ENCODE measurements at regions of chr1 and their contacts with region 1.

Region 1: GRCh38 chr1:27383039-27383605 is at the start of gene CD164L2:
- DNase-seq: no peak
- H3K4me3 ChIP-seq: no peak within 1 kb of the TSS
- H3K27ac ChIP-seq: no peak within 1 kb of the TSS
- H3K4me1 ChIP-seq: no peaks in the 10 kb centered on the region
- H3K27me3 ChIP-seq: no peaks in the 10 kb centered on the region
- CTCF ChIP-seq: no peak
- total RNA-seq, gene CD164L2: not detected

Region 2: GRCh38 chr1:27330786-27331451 is 52.2 kb before region 1 on chr1:
- intact Hi-C with region 1: no loop called
- DNase-seq: no peak
- H3K4me3 ChIP-seq: no peak overlapping the region
- H3K27ac ChIP-seq: no peak overlapping the region
- H3K4me1 ChIP-seq: no peaks in the 10 kb centered on the region
- H3K27me3 ChIP-seq: no peaks in the 10 kb centered on the region
- CTCF ChIP-seq: no peak

Region 3: DNA sequence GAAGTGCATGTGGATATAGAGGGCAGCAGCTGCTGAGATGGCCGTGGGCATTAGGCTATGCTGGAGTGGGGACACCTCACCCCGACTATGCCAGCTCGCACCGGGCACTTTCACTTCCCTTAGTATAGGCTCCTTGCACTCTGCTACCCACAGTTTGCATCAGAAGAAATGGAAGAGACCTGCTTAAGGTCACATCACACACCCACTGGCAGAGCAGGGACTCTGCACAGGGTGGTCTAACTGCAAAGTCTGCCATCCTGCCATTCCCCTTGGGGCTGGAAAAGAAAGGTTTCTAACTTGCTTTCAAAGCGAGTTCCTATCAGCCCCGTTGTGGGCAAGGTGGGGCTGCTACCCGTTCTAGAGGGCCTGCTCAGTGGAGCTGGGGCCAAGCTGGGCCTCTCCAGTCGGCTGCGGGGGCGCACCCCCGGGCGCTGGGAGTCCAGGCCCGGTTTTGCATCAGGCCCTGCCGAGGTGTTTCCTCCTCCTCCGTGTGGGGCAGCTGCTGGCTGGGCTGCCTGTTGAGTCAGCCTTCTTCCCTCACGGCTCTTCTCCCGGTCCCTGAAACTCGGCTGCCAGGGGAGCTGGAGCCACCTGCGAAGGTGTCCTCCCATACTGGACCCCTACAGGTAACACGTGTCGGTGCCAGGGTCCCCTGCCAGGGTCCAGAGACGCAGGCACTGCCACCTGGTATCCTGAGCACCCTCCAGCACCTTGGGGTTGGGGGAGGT is 41.4 kb before region 1 on chr1 and contains the start of gene SYTL1:
- intact Hi-C with region 1: loop called (anchors 5 kb)
- DNase-seq: no peak
- H3K4me3 ChIP-seq: peak within 1 kb of the TSS in 1 of 2 donors; percentile 0
- H3K27ac ChIP-seq: no peak within 1 kb of the TSS
- H3K4me1 ChIP-seq: no peaks in the 10 kb centered on the region
- H3K27me3 ChIP-seq: no peaks in the 10 kb centered on the region
- CTCF ChIP-seq: no peak
- total RNA-seq, gene SYTL1: 0.21 TPM

Region 4: GRCh38 chr1:27416387-27417111 is 33.4 kb after region 1 on chr1:
- intact Hi-C with region 1: no loop called
- DNase-seq: no peak
- H3K4me3 ChIP-seq: no peak overlapping the region
- H3K27ac ChIP-seq: no peak overlapping the region
- H3K4me1 ChIP-seq: peaks cover 4 to 33% of the 10 kb centered on the region in 2 donors
- H3K27me3 ChIP-seq: no peaks in the 10 kb centered on the region
- CTCF ChIP-seq: peak in 2 of 3 experiments; percentile 33 to 51

Measured in ascending aorta (tissue), 2 donors.